K562 (cell line): ENCODE measurements at regions of chr15 and their contacts with region 1.

Region 1: DNA sequence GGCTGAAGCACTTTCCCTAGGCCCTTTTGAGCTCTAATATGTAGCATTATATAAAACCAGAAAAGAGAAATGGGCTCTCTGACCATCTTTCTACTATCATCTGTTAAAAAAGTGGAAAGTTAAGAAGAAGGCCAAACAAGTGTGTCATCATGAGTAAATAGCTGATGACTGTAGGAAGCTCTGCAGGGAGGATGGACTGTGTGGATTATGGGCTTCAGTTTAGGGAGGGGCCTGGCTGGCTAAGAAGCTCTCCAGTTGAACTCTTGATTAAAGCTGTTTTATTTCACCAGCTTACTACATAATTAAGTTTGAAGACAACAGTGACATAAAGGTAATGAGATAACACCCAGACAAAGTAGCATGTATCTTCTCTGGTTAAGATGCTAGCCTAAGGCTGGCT is 30.6 kb downstream of the INTS14 start:
- DNase-seq: no peak
- ATAC-seq: no peak
- H3K4me3 ChIP-seq: no peak overlapping the region
- H3K27ac ChIP-seq: no peak overlapping the region
- H3K4me1 ChIP-seq: no peaks in the 10 kb centered on the region
- H3K27me3 ChIP-seq: no peaks in the 10 kb centered on the region
- CTCF ChIP-seq: no peak
- EP300 ChIP-seq: no peak
- POLR2A ChIP-seq: no peak
- RAD21 ChIP-seq: no peak

Region 2: GRCh38 chr15:65400760-65401610 is 179.3 kb before region 1 on chr15:
- CTCF ChIA-PET with region 1: no interaction called
- POLR2A ChIA-PET with region 1: interaction called, 3 read pairs
- in situ Hi-C with region 1: no loop called
- intact Hi-C with region 1: loop called (anchors 10 kb)
- DNase-seq: peak; percentile 78 to 90 (median 86)
- ATAC-seq: peak; percentile 96
- H3K4me3 ChIP-seq: no peak overlapping the region
- H3K27ac ChIP-seq: no peak overlapping the region
- H3K4me1 ChIP-seq: peaks cover 4 to 11% of the 10 kb centered on the region in 2 experiments; a peak in 3 of 5 replicates
- H3K27me3 ChIP-seq: peaks cover 19 to 50% of the 10 kb centered on the region in 2 experiments
- CTCF ChIP-seq: peak; percentile 77 to 85 (median 81)
- EP300 ChIP-seq: no peak
- POLR2A ChIP-seq: no peak
- RAD21 ChIP-seq: peak; percentile 60 to 80

Region 3: GRCh38 chr15:65595960-65596359 is 15.7 kb after region 1 on chr15:
- CTCF ChIA-PET with region 1: no interaction called
- POLR2A ChIA-PET with region 1: interaction called, 12 read pairs
- in situ Hi-C with region 1: no loop called
- intact Hi-C with region 1: no loop called
- DNase-seq: peak; percentile 33 to 43 (median 40)
- ATAC-seq: peak; percentile 68; the same call in 2 of the 3 replicates
- H3K4me3 ChIP-seq: no peak overlapping the region
- H3K27ac ChIP-seq: no peak overlapping the region
- H3K4me1 ChIP-seq: no peaks in the 10 kb centered on the region; a peak in 1 of 5 replicates
- H3K27me3 ChIP-seq: no peaks in the 10 kb centered on the region
- CTCF ChIP-seq: peak; percentile 48 to 56 (median 52); a peak in 5 of 6 replicates
- EP300 ChIP-seq: no peak
- POLR2A ChIP-seq: no peak
- RAD21 ChIP-seq: peak; percentile 36 to 57